ENCODE measurements at regions of chr1 and their contacts with region 1.

Region 1: GRCh38 chr1:170562646-170563338 is 30.8 kb downstream of the GORAB start:
- DNase-seq: peak; percentile 93
- H3K4me3 ChIP-seq: no peak overlapping the region
- H3K27ac ChIP-seq: peak overlapping the region; percentile 88
- H3K4me1 ChIP-seq: peaks cover 21% of the 10 kb centered on the region
- H3K27me3 ChIP-seq: no peaks in the 10 kb centered on the region
- CTCF ChIP-seq: no peak
- POLR2A ChIP-seq: no peak

Region 2: GRCh38 chr1:170494369-170494768 is 68.4 kb before region 1 on chr1:
- CTCF ChIA-PET with region 1: no interaction called
- POLR2A ChIA-PET with region 1: no interaction called
- dilution Hi-C with region 1: no loop called
- intact Hi-C with region 1: loop called (anchors 1 kb)
- DNase-seq: peak; percentile 91
- H3K4me3 ChIP-seq: peak overlapping the region in 1 of 3 experiments; percentile 10
- H3K27ac ChIP-seq: peak overlapping the region; percentile 33
- H3K4me1 ChIP-seq: peaks cover 20% of the 10 kb centered on the region
- H3K27me3 ChIP-seq: no peaks in the 10 kb centered on the region
- CTCF ChIP-seq: no peak
- POLR2A ChIP-seq: no peak

Measured in endothelial cell of umbilical vein (primary cell).